Pancreas (tissue), 10 donors: ENCODE measurements at regions of chr11 and their contacts with region 1.

Region 1: GRCh38 chr11:63478896-63479295 is 12.1 kb downstream of the PLAAT5 start:
- DNase-seq: peak in 3 of 6 donors; percentile 44 to 65 (median 53)
- ATAC-seq: peak; percentile 89 to 99 (median 96)
- H3K4me3 ChIP-seq: no peak overlapping the region
- H3K27ac ChIP-seq: no peak overlapping the region
- H3K4me1 ChIP-seq: peaks cover 0 to 4% (median 0%) of the 10 kb centered on the region in 3 donors
- H3K27me3 ChIP-seq: no peaks in the 10 kb centered on the region
- CTCF ChIP-seq: peak; percentile 72 to 84 (median 77)

Region 2: GRCh38 chr11:63621931-63622782 is 143.3 kb after region 1 on chr11:
- intact Hi-C with region 1: loop called in 1 of 3 experiments (anchors 10 kb)
- DNase-seq: peak in 4 of 6 donors; percentile 44 to 79 (median 58)
- ATAC-seq: peak; percentile 90 to 96 (median 94)
- H3K4me3 ChIP-seq: no peak overlapping the region
- H3K27ac ChIP-seq: no peak overlapping the region
- H3K4me1 ChIP-seq: peaks cover 5 to 21% (median 9%) of the 10 kb centered on the region in 3 donors
- H3K27me3 ChIP-seq: no peaks in the 10 kb centered on the region
- CTCF ChIP-seq: no peak

Region 3: GRCh38 chr11:63635762-63636465 is 157.0 kb after region 1 on chr11:
- intact Hi-C with region 1: loop called in 1 of 3 experiments (anchors 5 kb)
- DNase-seq: peak in 4 of 6 donors; percentile 35 to 64 (median 51)
- ATAC-seq: peak; percentile 73 to 90 (median 86)
- H3K4me3 ChIP-seq: no peak overlapping the region
- H3K27ac ChIP-seq: no peak overlapping the region
- H3K4me1 ChIP-seq: peaks cover 0 to 9% (median 5%) of the 10 kb centered on the region in 3 donors
- H3K27me3 ChIP-seq: no peaks in the 10 kb centered on the region
- CTCF ChIP-seq: peak; percentile 34 to 68 (median 58)